Ovary (tissue), 10 donors: ENCODE measurements at regions of chr9 and their contacts with region 1.

Region 1: DNA sequence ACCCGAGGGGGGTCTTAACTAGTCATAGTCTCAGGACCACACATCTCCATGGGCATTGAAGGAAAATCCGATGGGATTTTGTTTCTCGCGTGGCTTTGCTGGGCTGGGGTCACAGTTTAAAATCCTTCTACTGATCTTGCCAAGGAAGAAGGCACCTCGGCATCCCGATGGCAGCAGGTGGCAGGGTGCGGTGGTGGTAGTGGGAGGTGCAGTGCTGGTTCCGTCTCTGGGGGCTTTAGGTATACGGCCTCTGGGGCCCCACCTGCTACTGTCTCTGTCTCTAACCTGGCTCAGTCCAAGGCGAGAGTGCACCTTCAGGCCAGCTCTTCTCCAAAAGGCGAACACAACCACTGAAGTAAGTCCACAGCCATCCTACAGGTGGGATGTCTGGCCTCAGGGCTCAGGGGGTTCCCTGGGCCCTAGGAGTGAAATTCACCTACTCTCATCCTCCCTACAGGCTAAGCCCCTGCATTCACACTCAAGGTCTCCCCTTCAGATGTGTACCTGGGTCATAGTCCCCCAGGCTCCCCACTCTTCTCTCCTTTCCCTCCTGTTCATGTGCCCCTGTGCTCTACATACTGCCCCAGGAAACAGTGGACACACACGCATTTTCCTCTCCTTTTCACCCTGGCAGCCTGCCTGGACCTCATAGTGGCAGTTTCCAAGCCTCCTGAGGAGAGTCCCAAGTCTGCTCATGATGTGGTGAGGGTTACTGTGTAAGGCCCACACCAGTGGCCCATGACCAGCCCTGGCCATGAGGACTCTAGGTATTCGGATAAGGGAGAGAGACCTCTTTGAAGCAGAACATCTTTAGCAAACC is 736 bp upstream of the FCN2 start:
- DNase-seq: no peak
- H3K4me3 ChIP-seq: no peak overlapping the region
- H3K27ac ChIP-seq: no peak overlapping the region
- H3K4me1 ChIP-seq: peaks cover 8% of the 10 kb centered on the region
- H3K27me3 ChIP-seq: no peaks in the 10 kb centered on the region
- CTCF ChIP-seq: no peak
- EP300 ChIP-seq: no peak
- POLR2A ChIP-seq: no peak

Region 2: DNA sequence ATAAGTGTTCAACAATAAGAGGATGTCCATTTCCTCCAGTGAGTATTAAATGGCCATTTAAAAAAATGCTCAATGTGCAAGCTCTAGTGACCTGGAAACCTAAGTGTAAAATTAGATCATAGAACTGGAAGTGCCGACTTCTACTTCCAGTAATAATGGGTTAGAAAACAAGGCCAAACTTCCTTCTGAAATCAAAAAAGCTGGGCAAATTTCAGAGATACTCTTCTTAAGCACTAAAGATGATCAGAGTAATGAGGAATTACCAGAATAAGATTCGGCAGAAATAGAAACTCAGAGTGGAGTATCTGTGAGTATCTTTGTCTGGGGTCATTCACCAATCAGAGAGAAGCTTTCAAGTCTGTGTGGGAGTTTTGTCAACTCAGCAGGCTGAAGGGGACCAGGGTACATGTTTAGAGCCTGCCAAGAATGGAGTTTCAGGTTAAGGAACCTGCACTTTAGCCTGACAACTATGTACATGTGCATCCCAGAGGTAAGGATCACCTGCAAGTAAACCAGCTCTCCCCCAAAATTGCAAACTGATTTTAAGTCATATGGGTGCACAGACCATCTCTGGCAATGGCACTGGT is 17.8 kb after region 1 on chr9:
- intact Hi-C with region 1: loop called in 1 of 4 experiments (anchors 1 kb)
- DNase-seq: no peak
- H3K4me3 ChIP-seq: no peak overlapping the region
- H3K27ac ChIP-seq: peak overlapping the region in 1 of 2 donors; percentile 82
- H3K4me1 ChIP-seq: peaks cover 23% of the 10 kb centered on the region
- H3K27me3 ChIP-seq: no peaks in the 10 kb centered on the region
- CTCF ChIP-seq: no peak
- EP300 ChIP-seq: no peak
- POLR2A ChIP-seq: no peak

Region 3: GRCh38 chr9:135126535-135127187 is 246.8 kb after region 1 on chr9:
- intact Hi-C with region 1: no loop called
- DNase-seq: no peak
- H3K4me3 ChIP-seq: no peak overlapping the region
- H3K27ac ChIP-seq: no peak overlapping the region
- H3K4me1 ChIP-seq: no peaks in the 10 kb centered on the region
- H3K27me3 ChIP-seq: no peaks in the 10 kb centered on the region
- CTCF ChIP-seq: no peak
- EP300 ChIP-seq: no peak
- POLR2A ChIP-seq: no peak